Naive thymus-derived CD4-positive, alpha-beta T cell (primary cell): ENCODE measurements at regions of chr5 and their contacts with region 1.

Region 1: GRCh38 chr5:135310328-135310989 is 88.6 kb downstream of the MACROH2A1 start:
- DNase-seq: no peak
- ATAC-seq: no peak
- H3K4me3 ChIP-seq: no peak overlapping the region
- H3K4me3 Mint-ChIP-seq: peak overlapping the region in 2 of 10 donors; percentile 23 to 44
- H3K27ac ChIP-seq: no peak overlapping the region
- H3K27ac Mint-ChIP-seq: peak overlapping the region in 1 of 9 donors; percentile 80
- H3K4me1 ChIP-seq: no peaks in the 10 kb centered on the region
- H3K4me1 Mint-ChIP-seq: peaks cover 0 to 79% (median 19%) of the 10 kb centered on the region in 7 donors
- H3K27me3 ChIP-seq: no peaks in the 10 kb centered on the region
- H3K27me3 Mint-ChIP-seq: peaks cover 0 to 8% (median 0%) of the 10 kb centered on the region in 5 donors

Region 2: GRCh38 chr5:135279328-135279727 is 31.1 kb before region 1 on chr5:
- CTCF ChIA-PET with region 1: no interaction called
- POLR2A ChIA-PET with region 1: no interaction called
- intact Hi-C with region 1: no loop called
- DNase-seq: no peak
- ATAC-seq: no peak
- H3K4me3 ChIP-seq: no peak overlapping the region
- H3K4me3 Mint-ChIP-seq: no peak overlapping the region
- H3K27ac ChIP-seq: no peak overlapping the region
- H3K27ac Mint-ChIP-seq: no peak overlapping the region
- H3K4me1 ChIP-seq: no peaks in the 10 kb centered on the region
- H3K4me1 Mint-ChIP-seq: no peaks in the 10 kb centered on the region
- H3K27me3 ChIP-seq: no peaks in the 10 kb centered on the region
- H3K27me3 Mint-ChIP-seq: peaks cover 0 to 79% (median 3%) of the 10 kb centered on the region in 5 donors

Region 3: GRCh38 chr5:135324897-135325650 is 14.6 kb after region 1 on chr5:
- CTCF ChIA-PET with region 1: interaction called, 3 read pairs
- POLR2A ChIA-PET with region 1: interaction called, 9 read pairs
- intact Hi-C with region 1: loop called in 1 of 2 experiments (anchors 1 kb)
- DNase-seq: peak in 8 of 9 donors; percentile 23 to 72 (median 64)
- ATAC-seq: peak; percentile 71
- H3K4me3 ChIP-seq: no peak overlapping the region
- H3K4me3 Mint-ChIP-seq: peak overlapping the region; percentile 33 to 67 (median 59)
- H3K27ac ChIP-seq: peak overlapping the region; percentile 37
- H3K27ac Mint-ChIP-seq: peak overlapping the region; percentile 66 to 86 (median 79)
- H3K4me1 ChIP-seq: peaks cover 0 to 21% of the 10 kb centered on the region in 2 donors
- H3K4me1 Mint-ChIP-seq: peaks cover 8 to 31% (median 24%) of the 10 kb centered on the region in 7 donors
- H3K27me3 ChIP-seq: no peaks in the 10 kb centered on the region
- H3K27me3 Mint-ChIP-seq: no peaks in the 10 kb centered on the region

Region 4: DNA sequence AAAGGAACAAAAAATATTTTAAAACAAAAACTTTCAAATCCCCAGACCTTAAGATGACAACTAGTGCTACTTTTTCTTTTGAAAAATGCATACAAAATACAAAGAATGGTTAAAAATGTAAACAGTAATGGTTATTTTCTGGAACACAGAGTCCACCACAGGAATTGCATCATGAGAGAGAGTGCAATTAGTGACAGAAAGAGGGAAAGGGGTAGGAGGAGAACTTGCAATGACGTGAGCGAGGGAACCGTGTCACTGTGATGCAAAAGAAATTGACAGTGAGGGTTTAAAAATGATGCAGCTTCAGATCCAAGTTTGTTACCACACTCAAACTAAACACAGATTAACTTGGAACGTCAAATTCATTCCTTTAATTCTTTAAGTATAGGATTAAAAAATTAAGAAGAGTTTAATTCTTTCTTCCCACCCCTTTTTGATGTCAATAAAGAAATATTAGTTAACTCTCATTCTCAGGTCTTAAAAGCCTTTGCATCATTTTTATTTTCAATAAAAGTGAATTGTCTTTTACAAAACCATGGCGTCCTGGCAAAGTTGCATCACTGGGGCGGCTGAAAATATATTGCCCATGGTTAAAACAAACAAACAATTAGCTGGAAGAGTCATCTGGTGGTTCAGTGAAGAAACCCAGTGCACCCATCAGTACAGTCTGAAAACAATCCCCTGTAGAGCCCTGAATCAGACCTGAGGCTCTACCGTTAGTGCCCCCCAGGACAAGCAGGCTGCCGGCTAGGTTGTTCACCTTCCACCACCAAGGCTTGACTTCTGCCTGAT is 49.1 kb after region 1 on chr5:
- CTCF ChIA-PET with region 1: no interaction called
- POLR2A ChIA-PET with region 1: no interaction called
- intact Hi-C with region 1: loop called in 1 of 2 experiments (anchors 1 kb)
- DNase-seq: no peak
- ATAC-seq: no peak
- H3K4me3 ChIP-seq: no peak overlapping the region
- H3K4me3 Mint-ChIP-seq: no peak overlapping the region
- H3K27ac ChIP-seq: no peak overlapping the region
- H3K27ac Mint-ChIP-seq: peak overlapping the region in 5 of 9 donors; percentile 26 to 83 (median 48)
- H3K4me1 ChIP-seq: peaks cover 0 to 3% of the 10 kb centered on the region in 2 donors
- H3K4me1 Mint-ChIP-seq: peaks cover 9 to 42% (median 22%) of the 10 kb centered on the region in 7 donors
- H3K27me3 ChIP-seq: no peaks in the 10 kb centered on the region
- H3K27me3 Mint-ChIP-seq: no peaks in the 10 kb centered on the region